Mammary epithelial cell (primary cell): ENCODE measurements at regions of chr1 and their contacts with region 1.

Region 1: DNA sequence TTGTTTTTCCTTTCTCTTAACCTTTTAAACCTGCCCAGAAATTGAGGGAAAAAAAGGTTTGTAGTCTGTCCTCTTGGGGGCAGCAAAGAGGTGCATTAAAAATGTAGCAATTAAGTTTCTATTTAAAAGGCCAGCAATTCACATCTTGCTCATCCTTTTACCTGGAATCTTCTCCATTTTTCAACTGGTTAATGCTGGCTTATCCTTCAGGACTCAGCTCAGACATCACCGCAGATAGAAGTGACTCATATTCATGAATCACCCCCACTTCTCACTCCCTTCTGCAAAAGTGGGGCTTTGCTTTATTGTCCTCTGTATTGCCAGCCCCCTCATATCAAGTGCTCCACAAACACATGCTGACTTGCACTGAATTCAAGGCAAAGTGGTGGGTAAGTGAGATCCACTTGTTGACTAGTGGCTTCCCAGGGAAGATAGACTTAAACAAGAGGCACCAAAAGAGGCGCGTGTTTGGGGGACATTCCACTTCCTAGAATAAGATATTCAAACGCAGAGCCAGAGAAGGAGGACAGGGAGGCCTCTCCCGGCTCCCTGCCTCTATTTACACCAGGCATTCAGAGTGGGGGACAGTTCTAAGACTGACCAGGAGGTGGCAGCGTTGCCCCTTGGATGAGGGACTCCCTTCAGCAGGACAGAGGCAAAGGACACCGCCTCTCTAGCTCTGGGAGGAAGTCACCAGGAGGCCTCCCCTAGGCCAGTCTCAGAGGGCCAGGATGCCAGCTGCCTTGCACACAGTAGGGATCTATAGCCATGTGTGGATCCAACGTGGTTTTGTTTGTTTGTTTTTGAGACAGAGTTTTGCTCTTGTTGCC is 23.2 kb upstream of the ZNF648 start:
- DNase-seq: peak; percentile 77
- H3K4me3 ChIP-seq: no peak overlapping the region
- H3K27ac ChIP-seq: no peak overlapping the region
- H3K4me1 ChIP-seq: peaks cover 22% of the 10 kb centered on the region
- H3K27me3 ChIP-seq: no peaks in the 10 kb centered on the region
- CTCF ChIP-seq: peak; percentile 64 to 83

Region 2: GRCh38 chr1:181479137-181479745 is 605.5 kb before region 1 on chr1:
- CTCF ChIA-PET with region 1: interaction called, 4 read pairs
- dilution Hi-C with region 1: no loop called
- in situ Hi-C with region 1: no loop called
- intact Hi-C with region 1: loop called (anchors 1 kb)
- DNase-seq: peak; percentile 47
- H3K4me3 ChIP-seq: no peak overlapping the region
- H3K27ac ChIP-seq: no peak overlapping the region
- H3K4me1 ChIP-seq: no peaks in the 10 kb centered on the region
- H3K27me3 ChIP-seq: peaks cover 17% of the 10 kb centered on the region
- CTCF ChIP-seq: peak; percentile 90 to 95

Region 3: GRCh38 chr1:182041615-182042014 is 43.1 kb before region 1 on chr1:
- CTCF ChIA-PET with region 1: no interaction called
- dilution Hi-C with region 1: no loop called
- in situ Hi-C with region 1: no loop called
- intact Hi-C with region 1: no loop called
- DNase-seq: no peak
- H3K4me3 ChIP-seq: no peak overlapping the region
- H3K27ac ChIP-seq: no peak overlapping the region
- H3K4me1 ChIP-seq: no peaks in the 10 kb centered on the region
- H3K27me3 ChIP-seq: no peaks in the 10 kb centered on the region
- CTCF ChIP-seq: no peak

Region 4: GRCh38 chr1:182054698-182055326 is 29.9 kb before region 1 on chr1:
- CTCF ChIA-PET with region 1: interaction called, 13 read pairs
- dilution Hi-C with region 1: no loop called
- in situ Hi-C with region 1: no loop called
- intact Hi-C with region 1: no loop called
- DNase-seq: peak; percentile 38
- H3K4me3 ChIP-seq: no peak overlapping the region
- H3K27ac ChIP-seq: no peak overlapping the region
- H3K4me1 ChIP-seq: no peaks in the 10 kb centered on the region
- H3K27me3 ChIP-seq: no peaks in the 10 kb centered on the region
- CTCF ChIP-seq: peak; percentile 60

Region 5: GRCh38 chr1:182129398-182129797 is 44.7 kb after region 1 on chr1:
- CTCF ChIA-PET with region 1: no interaction called
- dilution Hi-C with region 1: no loop called
- in situ Hi-C with region 1: no loop called
- intact Hi-C with region 1: no loop called
- DNase-seq: no peak
- H3K4me3 ChIP-seq: no peak overlapping the region
- H3K27ac ChIP-seq: no peak overlapping the region
- H3K4me1 ChIP-seq: no peaks in the 10 kb centered on the region
- H3K27me3 ChIP-seq: no peaks in the 10 kb centered on the region
- CTCF ChIP-seq: no peak

Region 6: GRCh38 chr1:182301467-182302198 is 216.9 kb after region 1 on chr1:
- CTCF ChIA-PET with region 1: no interaction called
- dilution Hi-C with region 1: no loop called
- in situ Hi-C with region 1: no loop called
- intact Hi-C with region 1: loop called (anchors 5 kb)
- DNase-seq: peak; percentile 80
- H3K4me3 ChIP-seq: no peak overlapping the region
- H3K27ac ChIP-seq: no peak overlapping the region
- H3K4me1 ChIP-seq: peaks cover 3% of the 10 kb centered on the region
- H3K27me3 ChIP-seq: no peaks in the 10 kb centered on the region
- CTCF ChIP-seq: peak in 1 of 2 donors; percentile 45

Region 7: DNA sequence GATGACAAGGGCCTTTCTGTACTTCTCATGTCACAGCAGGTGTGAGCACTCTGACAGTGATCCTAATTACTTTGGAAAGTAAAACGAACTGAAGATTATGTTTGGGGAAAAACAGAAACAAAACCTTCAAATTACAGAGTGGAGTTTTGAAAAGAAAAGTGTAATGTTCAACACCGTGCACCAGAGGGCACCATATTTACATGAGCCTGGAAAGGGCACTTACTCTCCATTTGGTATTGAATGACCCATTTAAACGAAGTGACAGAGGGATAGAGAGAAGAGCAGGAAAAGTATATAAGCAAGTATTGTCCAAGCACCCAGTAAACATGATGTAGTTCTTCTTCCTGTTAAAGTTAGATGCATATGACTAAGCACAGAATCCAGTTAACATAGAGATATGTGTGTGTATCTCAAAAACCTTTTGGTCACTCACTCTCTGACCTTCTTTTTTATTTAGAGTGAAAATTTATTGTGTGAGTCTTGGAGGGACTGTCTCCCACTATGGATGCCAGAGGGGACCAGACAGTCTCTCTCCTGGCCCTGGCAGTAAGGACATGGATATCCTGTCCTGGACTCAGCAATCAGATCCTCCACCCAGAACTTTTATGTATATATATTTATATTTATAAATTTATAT is 361.4 kb after region 1 on chr1:
- CTCF ChIA-PET with region 1: no interaction called
- dilution Hi-C with region 1: no loop called
- in situ Hi-C with region 1: no loop called
- intact Hi-C with region 1: loop called (anchors 1 kb)
- DNase-seq: peak; percentile 31
- H3K4me3 ChIP-seq: no peak overlapping the region
- H3K27ac ChIP-seq: no peak overlapping the region
- H3K4me1 ChIP-seq: no peaks in the 10 kb centered on the region
- H3K27me3 ChIP-seq: no peaks in the 10 kb centered on the region
- CTCF ChIP-seq: peak; percentile 73 to 75

Region 8: GRCh38 chr1:182781841-182782586 is 697.3 kb after region 1 on chr1:
- CTCF ChIA-PET with region 1: interaction called, 5 read pairs
- dilution Hi-C with region 1: loop called (anchors 10 kb)
- in situ Hi-C with region 1: loop called (anchors 10 to 25 kb)
- intact Hi-C with region 1: loop called (anchors 1 kb)
- DNase-seq: peak; percentile 49
- H3K4me3 ChIP-seq: no peak overlapping the region
- H3K27ac ChIP-seq: no peak overlapping the region
- H3K4me1 ChIP-seq: no peaks in the 10 kb centered on the region
- H3K27me3 ChIP-seq: no peaks in the 10 kb centered on the region
- CTCF ChIP-seq: peak; percentile 66 to 87